ENCODE measurements at regions of chr3 and their contacts with region 1.

Region 1: DNA sequence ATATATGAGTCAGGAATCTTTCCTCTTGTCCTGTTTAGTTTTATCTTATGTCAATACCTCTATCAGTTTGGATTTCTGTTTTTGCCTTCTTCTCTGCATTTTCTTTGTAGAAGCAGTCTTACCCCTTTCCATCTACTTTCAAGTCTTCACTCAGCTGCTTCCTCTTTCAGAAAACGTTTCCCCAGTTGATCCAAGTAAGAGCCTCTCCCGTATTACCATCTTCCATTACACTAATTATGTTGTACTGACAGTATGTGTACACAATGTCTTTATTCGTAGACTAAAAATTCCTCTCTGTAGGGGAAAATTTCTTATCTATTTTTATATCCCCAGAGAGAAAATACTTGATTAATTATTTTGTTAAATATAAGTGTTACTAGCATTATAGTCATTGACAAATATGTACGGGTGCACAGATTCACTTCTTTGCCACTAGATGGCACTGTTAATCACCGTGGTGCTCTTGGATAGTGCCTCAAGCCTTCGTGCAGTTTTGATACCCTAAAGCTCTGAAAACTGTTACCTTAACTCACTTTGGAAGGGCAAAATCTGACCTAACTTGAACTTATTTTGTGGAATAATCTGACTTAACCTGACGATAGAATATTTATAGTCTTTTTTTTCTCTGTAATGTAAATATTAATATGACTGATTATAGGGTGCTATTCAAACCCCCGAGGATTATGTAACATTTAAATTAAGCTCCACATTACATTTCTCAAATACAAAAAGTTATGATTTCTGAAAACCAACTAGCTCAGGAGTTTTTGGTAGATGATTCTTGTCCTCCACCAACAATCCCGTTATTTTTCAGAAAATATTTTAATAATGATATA is 74.2 kb upstream of the POU1F1 start:
- DNase-seq: peak; percentile 71
- H3K4me3 ChIP-seq: no peak overlapping the region
- H3K27ac ChIP-seq: no peak overlapping the region
- H3K4me1 ChIP-seq: no peaks in the 10 kb centered on the region
- H3K27me3 ChIP-seq: no peaks in the 10 kb centered on the region

Region 2: DNA sequence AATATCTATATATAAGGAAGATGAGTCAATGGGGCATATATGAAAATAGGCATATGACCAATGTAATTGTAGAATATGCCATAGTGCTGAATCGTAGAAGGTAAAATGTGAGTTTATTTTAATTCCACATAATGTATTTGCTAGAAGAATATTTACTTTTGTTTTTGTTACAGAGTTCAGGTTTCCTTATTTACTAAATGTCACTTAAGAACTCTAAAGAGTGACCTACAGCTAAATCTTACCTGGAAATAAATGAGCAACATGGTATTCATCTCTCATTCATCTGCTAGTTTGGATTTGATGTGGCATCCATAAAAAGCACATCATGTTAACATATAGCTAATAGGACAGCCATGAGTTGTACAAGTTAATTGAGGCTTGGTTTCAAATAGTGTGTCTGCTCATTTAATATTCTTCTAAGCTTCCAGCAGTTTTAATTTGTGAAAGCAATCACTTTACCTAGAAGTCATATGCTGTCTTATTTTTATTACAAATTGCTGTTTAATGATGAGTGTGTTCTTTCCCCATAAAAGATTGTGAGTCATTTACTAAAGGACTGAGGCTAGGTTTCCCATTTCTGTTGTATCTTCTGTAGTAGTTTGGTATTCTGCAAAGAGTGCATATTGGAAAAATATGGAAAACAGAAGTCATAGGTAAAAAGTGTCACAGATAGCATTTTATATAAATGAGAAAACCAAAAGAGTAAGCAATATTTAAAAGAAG is 147.9 kb after region 1 on chr3:
- in situ Hi-C with region 1: loop called (anchors 10 kb)
- DNase-seq: peak; percentile 35
- H3K4me3 ChIP-seq: no peak overlapping the region
- H3K27ac ChIP-seq: no peak overlapping the region
- H3K4me1 ChIP-seq: peaks cover 10% of the 10 kb centered on the region
- H3K27me3 ChIP-seq: 0 out of 2 replicates have a peak, but pooled peaks cover under 1% of the 10 kb centered on the region

Measured in GM23248 (cell line).